GM12878 (cell line): ENCODE measurements at regions of chr3 and their contacts with region 1.

Region 1: GRCh38 chr3:141231101-141231935 is at the start of gene PXYLP1:
- DNase-seq: peak; percentile 16
- ATAC-seq: peak; percentile 97
- H3K4me3 ChIP-seq: peak within 1 kb of the TSS; percentile 62
- H3K27ac ChIP-seq: peak within 1 kb of the TSS; percentile 62
- H3K4me1 ChIP-seq: 0 out of 2 replicates have a peak, but pooled peaks cover 3% of the 10 kb centered on the region
- H3K27me3 ChIP-seq: peaks cover 0 to 2% of the 10 kb centered on the region in 2 experiments; a peak in 2 of 4 replicates
- CTCF ChIP-seq: peak; percentile 47 to 76 (median 59); a peak in 5 of 6 replicates
- EP300 ChIP-seq: no peak
- POLR2A ChIP-seq: peak; percentile 93
- RAD21 ChIP-seq: peak; percentile 56
- polyA plus RNA-seq, gene PXYLP1: 0.19 to 0.35 TPM

Region 2: DNA sequence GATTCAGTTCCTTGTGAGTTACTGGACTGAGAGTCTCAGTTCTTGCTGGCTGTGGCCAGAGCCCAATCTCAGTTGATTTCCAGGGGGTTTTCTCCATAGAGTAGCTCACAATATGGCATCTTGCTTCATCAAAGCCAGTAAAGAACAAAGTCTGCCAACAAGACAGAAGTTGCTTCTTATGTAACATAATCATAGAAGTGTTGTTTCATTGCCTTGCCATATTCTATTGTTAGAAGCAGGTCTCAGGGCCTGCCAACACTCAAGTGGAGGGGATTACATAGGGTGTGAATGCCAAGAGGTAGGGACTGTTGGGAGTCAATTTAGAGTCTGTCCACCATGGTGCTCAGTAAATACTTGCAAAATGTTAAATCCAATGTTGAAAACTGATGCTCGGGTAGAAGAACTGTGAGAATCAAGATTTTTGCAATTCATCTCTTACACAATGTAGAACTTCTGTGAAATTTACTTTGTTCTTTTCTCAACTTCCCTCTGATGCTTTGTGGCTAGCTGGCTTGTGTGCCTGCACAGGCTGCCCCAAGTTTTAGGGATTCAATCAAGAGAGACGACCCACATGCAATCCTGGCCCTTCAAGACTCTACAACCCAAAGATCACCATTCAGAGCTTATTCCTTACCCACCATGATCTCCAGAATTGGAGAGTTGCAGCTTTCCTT is 13.0 kb before region 1 on chr3:
- CTCF ChIA-PET with region 1: interaction called, 10 read pairs
- POLR2A ChIA-PET with region 1: no interaction called
- RAD21 ChIA-PET with region 1: no interaction called
- SMC1A ChIA-PET with region 1: interaction called, 6 read pairs
- in situ Hi-C with region 1: no loop called
- intact Hi-C with region 1: no loop called
- DNase-seq: no peak
- ATAC-seq: no peak
- H3K4me3 ChIP-seq: no peak overlapping the region
- H3K27ac ChIP-seq: no peak overlapping the region
- H3K4me1 ChIP-seq: no peaks in the 10 kb centered on the region
- H3K27me3 ChIP-seq: peaks cover 3 to 4% of the 10 kb centered on the region in 2 experiments; a peak in 2 of 4 replicates
- CTCF ChIP-seq: no peak
- EP300 ChIP-seq: no peak
- POLR2A ChIP-seq: no peak
- RAD21 ChIP-seq: no peak

Region 3: GRCh38 chr3:141255846-141256261 is 24.5 kb after region 1 on chr3:
- CTCF ChIA-PET with region 1: interaction called, 13 read pairs
- POLR2A ChIA-PET with region 1: no interaction called
- RAD21 ChIA-PET with region 1: interaction called, 4 read pairs
- SMC1A ChIA-PET with region 1: no interaction called
- in situ Hi-C with region 1: no loop called
- intact Hi-C with region 1: no loop called
- DNase-seq: no peak
- ATAC-seq: peak; percentile 59
- H3K4me3 ChIP-seq: no peak overlapping the region
- H3K27ac ChIP-seq: no peak overlapping the region
- H3K4me1 ChIP-seq: no peaks in the 10 kb centered on the region
- H3K27me3 ChIP-seq: no peaks in the 10 kb centered on the region
- CTCF ChIP-seq: peak; percentile 22 to 32 (median 23); a peak in 3 of 6 replicates
- EP300 ChIP-seq: no peak
- POLR2A ChIP-seq: no peak
- RAD21 ChIP-seq: no peak

Region 4: DNA sequence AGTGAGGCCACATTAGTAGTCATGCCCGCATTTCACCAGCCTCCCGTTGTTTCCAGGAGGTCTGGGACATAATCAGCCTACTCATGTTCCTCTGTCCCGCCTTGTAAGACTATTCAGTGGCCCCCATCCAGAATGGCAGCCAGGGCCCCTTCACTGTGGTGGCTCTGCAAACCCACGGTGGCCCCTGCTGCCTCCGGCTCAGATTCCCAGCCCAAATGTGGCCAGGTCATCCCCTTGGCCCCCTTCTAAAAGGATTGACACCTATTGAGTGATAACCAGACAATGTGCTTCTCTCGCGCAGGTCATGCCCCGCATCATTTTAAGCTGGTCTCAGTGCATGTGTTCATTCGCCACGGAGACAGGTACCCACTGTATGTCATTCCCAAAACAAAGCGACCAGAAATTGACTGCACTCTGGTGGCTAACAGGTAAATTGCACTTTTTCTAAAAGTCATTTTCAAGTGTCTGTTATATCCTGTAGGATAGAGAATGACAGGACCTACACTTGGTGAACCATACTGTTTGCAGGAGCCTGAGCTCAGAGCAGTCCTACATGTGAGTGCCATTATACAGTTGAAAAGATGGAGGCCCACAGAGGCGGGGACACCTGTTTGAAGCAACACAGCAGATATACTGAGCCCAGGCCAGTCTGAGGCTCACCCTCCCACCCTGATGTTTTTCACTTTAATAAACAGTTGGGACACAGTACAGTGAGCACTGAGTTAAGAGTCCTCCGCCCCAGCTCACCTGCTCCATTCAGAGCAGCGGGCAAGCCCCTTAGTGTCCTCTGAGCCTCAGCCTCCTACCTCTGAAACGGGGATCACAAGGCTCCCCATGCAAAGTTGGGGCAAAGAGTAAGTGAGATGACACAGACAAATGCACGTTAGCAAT is 48.0 kb after region 1 on chr3:
- CTCF ChIA-PET with region 1: interaction called, 5 read pairs
- POLR2A ChIA-PET with region 1: no interaction called
- RAD21 ChIA-PET with region 1: interaction called, 3 read pairs
- SMC1A ChIA-PET with region 1: no interaction called
- in situ Hi-C with region 1: no loop called
- intact Hi-C with region 1: loop called (anchors 5 kb)
- DNase-seq: no peak
- ATAC-seq: peak; percentile 87
- H3K4me3 ChIP-seq: no peak overlapping the region
- H3K27ac ChIP-seq: no peak overlapping the region
- H3K4me1 ChIP-seq: peaks cover 7% of the 10 kb centered on the region
- H3K27me3 ChIP-seq: no peaks in the 10 kb centered on the region
- CTCF ChIP-seq: peak; percentile 49 to 70 (median 56)
- EP300 ChIP-seq: no peak
- POLR2A ChIP-seq: no peak
- RAD21 ChIP-seq: peak; percentile 62

Region 5: DNA sequence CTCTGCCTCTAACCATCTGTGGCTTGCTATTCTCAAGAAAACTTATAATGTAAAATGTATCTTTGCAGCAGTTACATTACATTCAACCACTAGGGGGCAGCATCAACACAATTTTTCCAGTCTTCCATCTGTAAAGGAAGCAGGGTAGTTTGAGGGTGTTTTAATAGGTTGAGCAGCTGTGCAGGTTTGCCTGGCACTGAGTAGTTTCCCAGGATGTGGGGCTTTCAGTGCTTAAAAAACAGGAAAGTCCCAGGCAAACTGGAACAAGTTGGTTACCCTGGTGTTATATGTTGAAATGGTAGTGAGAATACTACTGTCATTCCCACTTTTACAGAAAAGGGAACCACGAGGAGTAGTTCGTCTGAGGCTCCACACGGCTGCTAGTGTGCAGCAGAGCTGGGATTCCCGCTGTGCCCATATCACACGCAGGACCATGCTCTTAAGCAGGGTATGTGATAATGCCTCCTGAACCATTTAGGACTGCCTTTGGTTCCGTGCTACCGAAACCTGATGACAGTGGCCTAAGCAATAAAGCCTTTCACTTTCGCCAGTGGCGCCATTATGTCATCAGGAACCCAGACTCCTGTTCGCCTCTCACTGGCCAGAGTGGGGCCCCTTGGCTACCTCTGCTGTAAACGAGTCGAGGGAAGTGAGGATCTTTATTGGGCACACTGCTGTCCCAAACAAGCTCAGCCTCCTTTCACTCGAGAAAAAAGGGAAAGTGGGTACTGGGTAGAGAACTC is 72.3 kb after region 1 on chr3:
- CTCF ChIA-PET with region 1: interaction called, 21 read pairs
- POLR2A ChIA-PET with region 1: no interaction called
- RAD21 ChIA-PET with region 1: interaction called, 6 read pairs
- SMC1A ChIA-PET with region 1: no interaction called
- in situ Hi-C with region 1: no loop called
- intact Hi-C with region 1: loop called (anchors 2 kb)
- DNase-seq: peak; percentile 64
- ATAC-seq: peak; percentile 93
- H3K4me3 ChIP-seq: no peak overlapping the region
- H3K27ac ChIP-seq: no peak overlapping the region
- H3K4me1 ChIP-seq: peaks cover 8% of the 10 kb centered on the region
- H3K27me3 ChIP-seq: no peaks in the 10 kb centered on the region
- CTCF ChIP-seq: peak; percentile 55 to 78 (median 70); a peak in 5 of 6 replicates
- EP300 ChIP-seq: no peak
- POLR2A ChIP-seq: no peak
- RAD21 ChIP-seq: peak; percentile 89